Gastrocnemius medialis (tissue), 4 donors: ENCODE measurements at regions of chr1 and their contacts with region 1.

Region 1: DNA sequence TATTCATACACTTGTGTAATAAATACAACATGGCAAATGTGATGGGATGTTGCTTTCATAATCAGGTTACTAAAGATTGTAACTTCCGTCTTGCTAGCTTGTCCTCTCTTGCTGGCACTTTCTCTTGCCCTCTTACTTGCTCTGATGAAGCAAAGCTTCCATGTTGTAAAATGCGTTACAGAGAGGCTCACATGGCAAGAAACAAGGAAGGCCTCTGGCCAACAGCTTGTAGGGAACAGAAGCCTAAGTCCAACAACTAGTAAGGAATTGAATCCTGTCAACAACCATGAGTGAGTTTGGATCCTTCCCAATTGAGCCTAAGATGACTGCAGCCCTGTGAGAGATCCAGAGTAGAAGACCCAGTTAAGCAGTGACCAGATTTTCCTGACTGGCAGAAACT is 15.4 kb downstream of the TMED5 start:
- DNase-seq: peak in 1 of 2 donors; percentile 28
- ATAC-seq: peak; percentile 60 to 76
- H3K4me3 ChIP-seq: no peak overlapping the region
- H3K27ac ChIP-seq: peak overlapping the region; percentile 65 to 82 (median 75)
- H3K4me1 ChIP-seq: peaks cover 29 to 41% of the 10 kb centered on the region in 2 donors
- H3K27me3 ChIP-seq: no peaks in the 10 kb centered on the region
- CTCF ChIP-seq: no peak
- POLR2A ChIP-seq: no peak

Region 2: GRCh38 chr1:93078986-93079654 is 85.7 kb before region 1 on chr1 and contains the start of gene MTF2:
- in situ Hi-C with region 1: loop called in 2 of 4 experiments (anchors 10 kb)
- intact Hi-C with region 1: loop called (anchors 5 kb)
- DNase-seq: peak; percentile 86 to 91
- ATAC-seq: peak; percentile 92 to 94
- H3K4me3 ChIP-seq: peak within 1 kb of the TSS; percentile 74 to 96 (median 96)
- H3K27ac ChIP-seq: peak within 1 kb of the TSS; percentile 83 to 90 (median 89)
- H3K4me1 ChIP-seq: peaks cover 23 to 26% of the 10 kb centered on the region in 2 donors
- H3K27me3 ChIP-seq: no peaks in the 10 kb centered on the region
- CTCF ChIP-seq: no peak
- POLR2A ChIP-seq: peak; percentile 57 to 67
- total RNA-seq, gene MTF2: 5.9 to 11.7 (median 9.5) TPM

Region 3: DNA sequence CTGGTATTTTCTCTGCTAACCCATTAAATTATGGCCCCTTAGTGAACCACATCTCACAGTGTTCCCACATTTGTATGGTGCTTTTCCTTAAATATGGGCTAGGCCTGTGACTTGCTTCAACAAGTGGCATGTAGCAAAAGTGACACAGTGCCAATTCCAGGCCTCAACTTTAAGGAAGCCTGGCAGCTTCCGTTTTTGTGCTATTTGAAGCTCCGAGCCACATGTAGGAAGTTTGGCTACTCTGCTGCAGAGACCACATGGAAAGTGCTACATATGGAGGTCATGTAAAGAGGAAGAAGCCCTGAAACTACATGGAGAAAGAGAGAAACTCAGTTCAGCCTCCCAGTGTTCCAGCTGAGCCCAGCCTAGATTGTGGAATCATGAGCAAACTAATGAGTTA is 152.4 kb after region 1 on chr1:
- in situ Hi-C with region 1: no loop called
- intact Hi-C with region 1: no loop called
- DNase-seq: peak; percentile 24 to 42
- ATAC-seq: peak in 1 of 2 donors; percentile 39
- H3K4me3 ChIP-seq: no peak overlapping the region
- H3K27ac ChIP-seq: no peak overlapping the region
- H3K4me1 ChIP-seq: no peaks in the 10 kb centered on the region
- H3K27me3 ChIP-seq: no peaks in the 10 kb centered on the region
- CTCF ChIP-seq: no peak
- POLR2A ChIP-seq: no peak

Region 4: DNA sequence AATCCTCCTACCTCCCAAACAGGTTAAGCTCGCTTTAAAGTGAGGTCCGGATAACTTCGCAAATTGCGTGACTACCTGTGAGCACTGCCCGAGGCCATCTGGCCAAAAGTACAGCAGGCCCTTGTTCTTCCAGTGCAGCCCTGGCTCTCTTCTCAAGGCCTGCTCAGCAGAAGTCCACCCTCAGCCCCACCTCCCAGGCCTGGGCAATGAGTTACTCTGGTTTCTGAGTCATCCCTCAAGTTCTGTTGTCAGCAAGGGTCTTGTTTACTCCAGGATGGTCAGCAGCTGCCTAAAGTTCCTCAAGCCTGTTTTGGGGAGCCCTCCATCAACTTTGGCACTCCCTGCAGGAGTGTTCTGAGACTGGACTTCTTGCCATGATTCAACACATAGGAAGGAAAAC is 415.1 kb after region 1 on chr1:
- in situ Hi-C with region 1: no loop called
- intact Hi-C with region 1: no loop called
- DNase-seq: peak in 1 of 2 donors; percentile 56
- ATAC-seq: peak; percentile 45 to 60
- H3K4me3 ChIP-seq: no peak overlapping the region
- H3K27ac ChIP-seq: peak overlapping the region; percentile 45 to 94 (median 90)
- H3K4me1 ChIP-seq: peaks cover 58 to 83% of the 10 kb centered on the region in 2 donors
- H3K27me3 ChIP-seq: no peaks in the 10 kb centered on the region
- CTCF ChIP-seq: no peak
- POLR2A ChIP-seq: peak in 1 of 2 donors; percentile 31